ENCODE measurements at regions of chrX and their contacts with region 1.

Region 1: DNA sequence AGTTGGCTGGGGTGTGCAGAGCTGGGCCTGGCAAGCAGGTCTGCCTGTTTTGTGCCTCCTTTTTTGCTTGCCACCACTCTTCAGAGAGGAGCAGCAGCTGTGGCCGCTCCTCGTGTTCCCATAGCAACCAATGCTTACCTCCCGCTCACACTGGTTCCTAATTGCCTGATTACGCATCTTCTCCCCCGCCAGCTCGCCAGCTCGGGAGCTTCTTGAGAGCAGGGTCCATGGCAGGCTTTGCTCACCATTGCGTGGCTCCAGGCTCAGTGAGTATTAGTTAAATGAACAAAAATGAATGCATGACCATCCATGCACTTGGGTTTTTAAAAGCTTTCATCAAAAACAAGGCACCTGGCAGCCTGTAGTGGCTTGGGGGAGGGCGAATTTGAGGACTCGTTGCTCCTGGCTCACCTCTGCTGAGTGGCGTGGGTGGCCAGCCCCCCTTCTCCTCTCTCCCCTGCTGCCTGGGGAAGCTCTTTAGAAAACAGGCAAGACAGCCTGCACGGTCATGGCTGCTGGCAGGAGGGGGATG is 14.2 kb upstream of the PJA1 start:
- DNase-seq: no peak
- H3K4me3 ChIP-seq: no peak overlapping the region
- H3K27ac ChIP-seq: no peak overlapping the region
- H3K4me1 ChIP-seq: no peaks in the 10 kb centered on the region
- H3K27me3 ChIP-seq: peaks cover 0 to 52% of the 10 kb centered on the region in 2 donors
- CTCF ChIP-seq: no peak
- POLR2A ChIP-seq: no peak

Region 2: DNA sequence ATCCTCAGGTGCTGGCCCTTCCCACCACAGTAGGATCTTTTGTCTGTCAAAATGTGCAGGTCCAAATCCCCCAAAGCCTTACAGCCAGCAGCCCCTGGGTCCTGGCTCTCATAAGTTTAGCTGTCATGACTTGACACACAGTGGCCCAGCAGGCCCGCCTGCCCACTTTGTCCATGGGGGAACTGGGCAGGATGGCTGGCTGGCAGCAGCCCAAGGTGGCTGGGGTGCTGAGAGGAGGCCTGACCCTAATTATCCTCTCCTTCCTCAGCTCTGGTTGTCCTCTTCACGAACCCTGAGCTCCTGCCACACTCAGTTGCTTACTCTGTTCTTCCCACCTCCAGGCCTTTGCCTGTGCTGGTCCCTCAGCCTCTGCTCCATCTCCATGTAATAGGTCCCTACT is 32.3 kb after region 1 on chrX:
- intact Hi-C with region 1: loop called (anchors 1 kb)
- DNase-seq: no peak
- H3K4me3 ChIP-seq: no peak overlapping the region
- H3K27ac ChIP-seq: no peak overlapping the region
- H3K4me1 ChIP-seq: no peaks in the 10 kb centered on the region
- H3K27me3 ChIP-seq: peaks cover 0 to 86% of the 10 kb centered on the region in 2 donors
- CTCF ChIP-seq: no peak
- POLR2A ChIP-seq: no peak